Mammary epithelial cell (primary cell): ENCODE measurements at regions of chr20 and their contacts with region 1.

Region 1: DNA sequence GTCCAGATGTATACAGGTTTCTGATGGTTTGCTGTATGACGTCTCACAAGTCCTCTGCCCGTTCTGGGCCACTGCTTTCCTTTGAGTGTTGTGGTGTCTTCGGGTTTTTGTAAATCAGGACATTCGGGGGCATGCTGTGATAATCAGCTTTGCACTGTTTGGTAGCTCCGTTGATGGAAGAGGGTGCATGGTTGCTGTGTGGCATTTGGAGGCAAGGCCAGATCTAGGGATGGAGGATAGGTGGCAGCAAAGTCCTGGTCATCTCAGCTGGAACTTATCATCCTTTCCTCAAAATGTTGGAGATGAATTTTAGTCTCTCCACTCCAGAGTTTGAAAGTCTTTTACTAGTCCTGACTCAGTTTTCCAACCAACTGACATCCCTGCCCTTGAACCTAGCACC is 91.0 kb downstream of the SCP2D1 start:
- DNase-seq: no peak
- H3K4me3 ChIP-seq: no peak overlapping the region
- H3K27ac ChIP-seq: no peak overlapping the region
- H3K4me1 ChIP-seq: no peaks in the 10 kb centered on the region
- H3K27me3 ChIP-seq: no peaks in the 10 kb centered on the region
- CTCF ChIP-seq: peak; percentile 45 to 74

Region 2: DNA sequence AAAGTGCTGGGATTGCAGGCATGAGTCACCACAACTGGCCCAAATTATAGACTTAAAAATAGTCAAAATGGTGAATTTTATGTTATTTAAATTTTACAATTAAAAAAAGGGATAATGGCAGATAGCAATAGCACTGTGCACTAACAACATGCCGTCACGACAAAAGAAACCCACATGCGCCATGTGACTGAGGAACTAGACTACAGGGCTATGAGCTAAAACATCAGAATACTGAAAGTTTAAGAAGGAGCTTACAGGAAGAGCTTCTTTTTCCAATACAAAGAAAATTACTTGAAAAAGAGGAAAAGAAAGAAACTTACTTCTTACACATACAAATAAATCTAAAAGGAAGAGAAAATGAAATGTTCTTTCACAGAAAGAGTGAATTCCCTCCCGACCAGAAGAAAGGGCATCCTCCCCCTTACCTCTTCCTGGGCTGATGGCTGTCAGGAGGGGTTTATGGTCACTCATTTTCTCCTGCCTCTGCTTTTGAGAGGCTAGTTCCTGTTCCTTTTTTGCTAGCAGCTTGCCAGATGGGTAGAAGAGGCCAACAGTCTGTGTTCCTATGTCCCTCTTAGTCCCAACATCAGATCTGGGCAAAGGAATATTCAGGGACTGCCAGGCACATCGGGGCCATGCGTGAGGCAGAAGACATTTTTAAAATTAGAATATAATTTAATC is 492.3 kb before region 1 on chr20:
- CTCF ChIA-PET with region 1: no interaction called
- dilution Hi-C with region 1: no loop called
- in situ Hi-C with region 1: no loop called
- intact Hi-C with region 1: loop called (anchors 10 kb)
- DNase-seq: no peak
- H3K4me3 ChIP-seq: no peak overlapping the region
- H3K27ac ChIP-seq: no peak overlapping the region
- H3K4me1 ChIP-seq: peaks cover 19% of the 10 kb centered on the region
- H3K27me3 ChIP-seq: no peaks in the 10 kb centered on the region
- CTCF ChIP-seq: no peak

Region 3: GRCh38 chr20:18831830-18832499 is 72.7 kb before region 1 on chr20:
- CTCF ChIA-PET with region 1: no interaction called
- dilution Hi-C with region 1: loop called (anchors 10 kb)
- in situ Hi-C with region 1: no loop called
- intact Hi-C with region 1: no loop called
- DNase-seq: no peak
- H3K4me3 ChIP-seq: no peak overlapping the region
- H3K27ac ChIP-seq: no peak overlapping the region
- H3K4me1 ChIP-seq: no peaks in the 10 kb centered on the region
- H3K27me3 ChIP-seq: no peaks in the 10 kb centered on the region
- CTCF ChIP-seq: no peak

Region 4: DNA sequence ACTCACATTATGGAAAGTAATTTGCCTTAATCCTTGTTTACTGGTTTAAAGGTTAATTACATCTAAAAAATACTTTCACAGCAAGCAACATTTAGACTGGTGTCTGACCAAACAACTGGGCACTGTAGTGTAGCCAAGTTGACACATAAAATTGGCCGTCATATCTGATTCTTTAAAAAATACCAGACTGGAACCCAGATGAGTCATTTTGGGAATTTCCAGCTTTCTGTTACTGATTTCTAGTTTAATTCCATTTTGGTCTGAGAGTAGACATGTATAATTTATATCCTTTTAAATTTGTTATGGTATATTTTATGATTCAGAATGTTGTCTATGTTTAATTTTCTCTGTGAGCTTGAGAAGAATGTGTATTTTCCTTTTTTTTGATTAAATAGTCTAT is 47.0 kb before region 1 on chr20:
- CTCF ChIA-PET with region 1: no interaction called
- dilution Hi-C with region 1: no loop called
- in situ Hi-C with region 1: no loop called
- intact Hi-C with region 1: no loop called
- DNase-seq: peak; percentile 68
- H3K4me3 ChIP-seq: no peak overlapping the region
- H3K27ac ChIP-seq: peak overlapping the region; percentile 38
- H3K4me1 ChIP-seq: peaks cover 20% of the 10 kb centered on the region
- H3K27me3 ChIP-seq: no peaks in the 10 kb centered on the region
- CTCF ChIP-seq: no peak

Region 5: GRCh38 chr20:19185090-19185489 is 280.5 kb after region 1 on chr20:
- CTCF ChIA-PET with region 1: no interaction called
- dilution Hi-C with region 1: no loop called
- in situ Hi-C with region 1: no loop called
- intact Hi-C with region 1: loop called (anchors 1 kb)
- DNase-seq: no peak
- H3K4me3 ChIP-seq: no peak overlapping the region
- H3K27ac ChIP-seq: no peak overlapping the region
- H3K4me1 ChIP-seq: no peaks in the 10 kb centered on the region
- H3K27me3 ChIP-seq: no peaks in the 10 kb centered on the region
- CTCF ChIP-seq: no peak

Region 6: DNA sequence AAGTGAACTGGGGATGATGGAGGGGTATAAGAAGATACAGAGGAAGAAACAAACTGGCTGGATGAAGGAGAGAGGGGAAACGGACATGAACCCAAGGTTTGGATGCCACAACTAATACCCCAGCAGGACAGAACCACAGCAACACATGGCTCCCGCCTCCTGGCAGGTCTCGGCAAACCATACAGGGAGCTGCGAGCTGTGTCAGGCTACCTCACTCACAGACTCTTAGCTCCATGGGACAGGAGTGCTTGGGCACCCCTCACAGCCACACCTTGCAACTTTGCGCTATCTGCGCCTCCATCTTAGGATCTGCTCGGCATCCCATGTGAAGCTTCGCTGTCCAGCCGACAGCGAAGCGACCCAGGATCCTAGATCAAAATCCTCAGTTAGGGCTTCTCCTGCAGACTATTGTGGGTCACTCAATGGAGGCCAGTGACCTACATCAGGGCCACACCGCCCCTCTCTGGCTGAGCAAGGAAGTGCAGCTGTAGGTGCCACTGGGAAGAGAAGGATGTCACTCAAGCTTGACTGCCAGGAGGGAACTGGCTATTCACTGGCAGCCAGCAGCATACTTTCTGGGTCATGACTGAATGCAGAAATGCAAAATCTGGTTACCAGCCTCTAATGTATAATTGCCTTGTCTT is 679.0 kb after region 1 on chr20:
- CTCF ChIA-PET with region 1: no interaction called
- dilution Hi-C with region 1: no loop called
- in situ Hi-C with region 1: loop called in 1 of 2 experiments (anchors 25 kb)
- intact Hi-C with region 1: loop called (anchors 1 kb)
- DNase-seq: peak; percentile 22
- H3K4me3 ChIP-seq: no peak overlapping the region
- H3K27ac ChIP-seq: no peak overlapping the region
- H3K4me1 ChIP-seq: no peaks in the 10 kb centered on the region
- H3K27me3 ChIP-seq: no peaks in the 10 kb centered on the region
- CTCF ChIP-seq: peak; percentile 87 to 88